Activated CD4-positive, alpha-beta memory T cell treated with anti-CD3 and anti-CD28 coated beads for 36 hours (primary cell): ENCODE measurements at regions of chr12 and their contacts with region 1.

Region 1: DNA sequence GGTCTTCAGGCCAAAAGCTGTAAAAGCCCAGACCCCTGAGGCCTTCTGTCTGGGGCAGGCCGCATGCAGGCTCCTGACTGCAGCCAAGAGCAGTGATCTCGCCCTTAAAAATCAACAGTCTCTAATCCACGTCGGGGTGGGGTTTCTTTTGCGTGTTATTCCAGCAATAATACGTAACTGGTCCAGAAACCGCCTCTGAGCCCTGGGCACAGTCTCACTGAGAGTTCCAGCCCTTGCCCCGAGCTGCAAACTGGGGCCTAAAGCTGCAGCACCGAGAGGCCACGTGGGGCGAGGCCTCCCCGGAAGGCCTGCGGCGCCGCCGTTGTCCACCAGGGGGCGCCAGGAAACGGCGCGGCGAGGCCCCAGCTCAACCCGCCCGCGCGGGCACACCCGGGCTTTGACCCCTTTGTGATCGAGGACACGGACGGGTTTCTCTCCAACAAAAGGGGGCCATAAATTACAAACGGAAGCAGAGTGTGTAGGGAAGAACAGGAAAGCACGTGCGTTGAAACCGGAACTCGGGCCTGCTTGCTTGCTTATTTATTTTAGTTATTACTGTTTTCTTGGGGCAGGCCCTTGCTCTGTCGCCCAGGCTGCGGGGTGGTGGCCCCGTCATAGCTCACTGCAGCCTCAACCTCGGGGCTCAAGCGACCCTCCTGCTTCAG is 87.2 kb downstream of the NINJ2 start:
- DNase-seq: peak; percentile 88
- H3K4me3 Mint-ChIP-seq: peak overlapping the region; percentile 51
- H3K27ac Mint-ChIP-seq: peak overlapping the region; percentile 45
- H3K4me1 Mint-ChIP-seq: peaks cover 34% of the 10 kb centered on the region
- H3K27me3 Mint-ChIP-seq: no peaks in the 10 kb centered on the region

Region 2: DNA sequence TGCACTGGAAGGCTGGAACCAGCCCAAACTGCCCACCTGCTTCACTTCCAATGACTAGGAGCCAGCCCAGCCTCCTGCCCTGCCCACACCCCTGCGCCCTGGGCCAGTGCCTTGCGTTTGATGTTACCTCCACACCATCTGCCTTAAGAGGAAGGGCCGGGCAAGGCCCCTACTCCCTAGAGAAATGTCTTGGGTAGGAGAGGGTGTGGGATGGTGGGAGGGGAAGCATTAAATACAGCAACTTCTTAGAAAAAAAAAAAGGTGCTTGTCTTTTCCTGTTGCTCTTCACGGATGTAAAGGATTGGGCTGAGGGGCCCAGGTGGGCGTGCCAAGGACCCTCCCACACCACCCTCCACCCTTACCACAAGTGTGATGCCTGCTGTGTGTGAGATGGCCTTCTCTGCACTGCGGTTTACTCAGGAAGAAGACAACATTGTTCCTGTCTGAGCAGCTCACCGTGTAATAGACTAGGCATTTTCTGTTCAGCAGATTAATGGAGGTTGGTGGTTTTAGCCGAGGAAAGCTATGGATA is 12.8 kb before region 1 on chr12:
- CTCF ChIA-PET with region 1: interaction called, 12 read pairs
- POLR2A ChIA-PET with region 1: no interaction called
- intact Hi-C with region 1: no loop called
- DNase-seq: peak; percentile 71
- H3K4me3 Mint-ChIP-seq: peak overlapping the region; percentile 43
- H3K27ac Mint-ChIP-seq: peak overlapping the region; percentile 64
- H3K4me1 Mint-ChIP-seq: peaks cover 51% of the 10 kb centered on the region
- H3K27me3 Mint-ChIP-seq: no peaks in the 10 kb centered on the region

Region 3: DNA sequence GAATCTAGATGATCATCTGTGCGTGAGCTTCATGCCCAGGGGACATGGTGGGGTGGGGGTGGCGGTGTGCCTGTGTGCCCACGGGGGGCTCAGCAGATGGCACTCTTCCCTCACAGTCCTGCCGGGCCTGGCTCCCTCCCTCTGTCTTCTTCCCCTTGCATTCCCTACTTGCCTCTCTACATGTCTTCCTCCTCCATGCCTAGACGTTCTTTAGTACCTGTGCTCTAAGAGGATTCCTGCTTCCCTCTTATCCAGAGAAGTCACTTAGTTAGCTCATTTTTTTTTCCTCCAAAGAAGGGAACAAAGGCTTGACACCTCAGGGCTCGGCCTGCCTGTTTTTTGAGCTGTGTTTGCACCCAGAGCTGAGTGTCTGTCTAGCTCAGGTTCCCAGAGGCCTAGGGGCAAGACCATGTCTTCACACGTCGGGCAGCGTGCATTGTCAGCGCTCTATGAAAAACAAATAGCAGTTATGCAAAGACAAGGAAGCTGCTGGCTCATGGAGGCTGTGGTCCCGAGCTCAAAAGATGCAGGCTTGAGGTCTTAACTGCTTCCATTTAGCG is 38.4 kb after region 1 on chr12:
- CTCF ChIA-PET with region 1: interaction called, 8 read pairs
- POLR2A ChIA-PET with region 1: no interaction called
- intact Hi-C with region 1: loop called (anchors 5 kb)
- DNase-seq: peak; percentile 59
- H3K4me3 Mint-ChIP-seq: no peak overlapping the region
- H3K27ac Mint-ChIP-seq: no peak overlapping the region
- H3K4me1 Mint-ChIP-seq: peaks cover 18% of the 10 kb centered on the region
- H3K27me3 Mint-ChIP-seq: no peaks in the 10 kb centered on the region

Region 4: DNA sequence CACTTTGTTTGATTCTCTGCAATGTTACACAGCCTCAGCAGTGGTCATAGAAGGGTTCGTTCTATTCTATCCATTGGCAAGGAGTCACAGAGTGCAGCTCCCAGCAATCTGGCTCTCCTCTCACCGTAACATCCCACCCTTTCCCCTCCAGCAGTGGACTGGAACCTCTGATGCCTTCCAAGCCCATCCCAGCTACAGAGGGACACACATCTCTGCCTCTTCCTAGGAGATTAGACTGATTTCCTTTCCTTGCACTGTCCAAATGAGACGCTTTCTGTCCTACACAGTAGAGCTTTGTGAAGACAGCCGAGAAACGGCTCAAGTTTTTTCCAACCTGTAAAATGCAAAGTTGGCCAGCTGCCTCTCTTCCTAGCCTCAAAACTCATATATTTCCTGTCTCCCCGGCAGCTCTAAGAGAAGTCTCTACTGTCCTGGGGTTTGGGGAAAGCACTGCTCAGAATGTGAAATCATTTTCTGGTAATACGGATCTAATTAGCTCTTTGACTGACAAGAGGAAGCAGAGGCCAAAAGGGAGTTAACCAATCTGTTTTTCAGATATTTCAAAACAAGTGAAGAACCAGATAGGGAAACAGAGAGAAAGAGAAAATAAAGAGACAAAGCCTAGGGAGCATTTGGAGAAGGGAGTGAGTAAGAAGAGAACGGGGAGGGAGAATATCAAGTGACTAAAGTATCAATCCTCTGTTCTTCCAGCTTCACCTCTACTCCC is 86.6 kb after region 1 on chr12:
- CTCF ChIA-PET with region 1: interaction called, 21 read pairs
- POLR2A ChIA-PET with region 1: no interaction called
- intact Hi-C with region 1: loop called (anchors 5 kb)
- DNase-seq: peak; percentile 4
- H3K4me3 Mint-ChIP-seq: peak overlapping the region; percentile 52
- H3K27ac Mint-ChIP-seq: peak overlapping the region; percentile 65
- H3K4me1 Mint-ChIP-seq: peaks cover 50% of the 10 kb centered on the region
- H3K27me3 Mint-ChIP-seq: no peaks in the 10 kb centered on the region

Region 5: DNA sequence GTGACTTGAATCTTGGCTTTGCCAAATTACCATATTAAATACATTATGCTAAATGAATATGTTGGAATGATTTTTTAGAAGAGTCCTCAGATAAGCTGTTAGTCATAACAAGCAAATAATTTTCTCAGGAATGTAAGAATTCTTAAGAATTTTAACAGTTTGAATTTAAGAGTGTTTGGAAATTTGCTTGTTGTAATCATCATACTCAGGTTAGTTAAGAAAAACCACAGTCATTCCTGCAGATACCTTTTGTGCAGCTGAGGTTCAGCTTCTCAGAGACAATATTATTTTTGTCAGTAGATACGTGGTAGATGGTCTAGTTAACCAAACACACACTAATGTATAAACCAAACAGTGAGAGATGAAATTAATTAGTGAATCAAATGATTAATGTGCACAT is 185.2 kb after region 1 on chr12:
- CTCF ChIA-PET with region 1: interaction called, 10 read pairs
- POLR2A ChIA-PET with region 1: no interaction called
- intact Hi-C with region 1: no loop called
- DNase-seq: no peak
- H3K4me3 Mint-ChIP-seq: no peak overlapping the region
- H3K27ac Mint-ChIP-seq: peak overlapping the region; percentile 26
- H3K4me1 Mint-ChIP-seq: peaks cover 65% of the 10 kb centered on the region
- H3K27me3 Mint-ChIP-seq: no peaks in the 10 kb centered on the region

Region 6: GRCh38 chr12:1093166-1093751 is 517.2 kb after region 1 on chr12:
- CTCF ChIA-PET with region 1: interaction called, 3 read pairs
- POLR2A ChIA-PET with region 1: no interaction called
- intact Hi-C with region 1: loop called (anchors 10 kb)
- DNase-seq: peak; percentile 18
- H3K4me3 Mint-ChIP-seq: no peak overlapping the region
- H3K27ac Mint-ChIP-seq: no peak overlapping the region
- H3K4me1 Mint-ChIP-seq: peaks cover 11% of the 10 kb centered on the region
- H3K27me3 Mint-ChIP-seq: no peaks in the 10 kb centered on the region